ENCODE measurements at regions of chr9 and their contacts with region 1.

Region 1: DNA sequence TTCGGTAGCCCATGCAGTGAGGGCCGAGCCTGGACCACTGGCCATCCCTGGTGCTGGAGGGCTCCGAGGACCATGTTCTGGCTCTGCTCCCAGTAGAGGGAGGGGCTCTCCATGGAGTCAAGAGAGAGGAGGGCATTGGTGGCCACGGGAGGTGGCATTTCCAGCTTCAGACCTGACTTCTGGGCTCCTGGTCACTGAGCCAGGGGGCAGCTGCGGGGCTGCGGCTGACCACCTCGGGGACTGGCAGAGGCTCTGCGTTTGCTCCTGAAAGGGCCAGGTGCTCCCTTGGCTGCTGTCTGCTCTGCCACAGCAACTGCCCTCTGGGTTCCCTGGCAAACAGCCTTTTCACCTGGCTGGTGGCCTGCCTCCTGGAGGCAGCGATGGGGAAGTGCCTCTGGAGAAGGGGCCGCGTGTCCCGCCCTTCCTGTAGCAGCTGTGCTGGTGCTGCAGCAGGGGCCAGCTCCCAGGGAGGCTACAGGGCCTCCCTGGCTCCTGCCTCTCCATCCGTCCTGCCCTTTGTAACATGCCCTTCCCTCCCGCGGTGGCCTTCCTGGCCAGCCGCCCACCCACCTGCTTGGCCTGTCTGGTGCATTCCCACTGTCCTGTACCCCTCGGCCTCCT is 144.6 kb downstream of the CACNA1B start:
- DNase-seq: peak in 2 of 5 donors; percentile 5 to 10
- H3K4me3 ChIP-seq: no peak overlapping the region
- H3K4me3 Mint-ChIP-seq: peak overlapping the region in 3 of 8 donors; percentile 39 to 54 (median 49)
- H3K27ac ChIP-seq: no peak overlapping the region
- H3K27ac Mint-ChIP-seq: no peak overlapping the region
- H3K4me1 ChIP-seq: peaks cover 4% of the 10 kb centered on the region
- H3K4me1 Mint-ChIP-seq: peaks cover 0 to 11% (median 2%) of the 10 kb centered on the region in 4 donors
- H3K27me3 ChIP-seq: no peaks in the 10 kb centered on the region
- H3K27me3 Mint-ChIP-seq: peaks cover 16 to 22% of the 10 kb centered on the region in 2 donors

Region 2: GRCh38 chr9:137470785-137471184 is 551.4 kb before region 1 on chr9:
- CTCF ChIA-PET with region 1: no interaction called
- POLR2A ChIA-PET with region 1: no interaction called
- intact Hi-C with region 1: no loop called
- DNase-seq: no peak
- H3K4me3 ChIP-seq: no peak overlapping the region
- H3K4me3 Mint-ChIP-seq: no peak overlapping the region
- H3K27ac ChIP-seq: no peak overlapping the region
- H3K27ac Mint-ChIP-seq: no peak overlapping the region
- H3K4me1 ChIP-seq: no peaks in the 10 kb centered on the region
- H3K4me1 Mint-ChIP-seq: peaks cover 2 to 6% (median 4%) of the 10 kb centered on the region in 4 donors
- H3K27me3 ChIP-seq: no peaks in the 10 kb centered on the region
- H3K27me3 Mint-ChIP-seq: no peaks in the 10 kb centered on the region

Region 3: GRCh38 chr9:137672907-137673791 is 349.1 kb before region 1 on chr9:
- CTCF ChIA-PET with region 1: no interaction called
- POLR2A ChIA-PET with region 1: no interaction called
- intact Hi-C with region 1: loop called (anchors 10 kb)
- DNase-seq: peak; percentile 48 to 63 (median 60)
- H3K4me3 ChIP-seq: no peak overlapping the region
- H3K4me3 Mint-ChIP-seq: no peak overlapping the region
- H3K27ac ChIP-seq: no peak overlapping the region
- H3K27ac Mint-ChIP-seq: peak overlapping the region in 5 of 7 donors; percentile 33 to 78 (median 43)
- H3K4me1 ChIP-seq: peaks cover 17% of the 10 kb centered on the region
- H3K4me1 Mint-ChIP-seq: peaks cover 24 to 62% (median 51%) of the 10 kb centered on the region in 4 donors
- H3K27me3 ChIP-seq: no peaks in the 10 kb centered on the region
- H3K27me3 Mint-ChIP-seq: no peaks in the 10 kb centered on the region

Region 4: DNA sequence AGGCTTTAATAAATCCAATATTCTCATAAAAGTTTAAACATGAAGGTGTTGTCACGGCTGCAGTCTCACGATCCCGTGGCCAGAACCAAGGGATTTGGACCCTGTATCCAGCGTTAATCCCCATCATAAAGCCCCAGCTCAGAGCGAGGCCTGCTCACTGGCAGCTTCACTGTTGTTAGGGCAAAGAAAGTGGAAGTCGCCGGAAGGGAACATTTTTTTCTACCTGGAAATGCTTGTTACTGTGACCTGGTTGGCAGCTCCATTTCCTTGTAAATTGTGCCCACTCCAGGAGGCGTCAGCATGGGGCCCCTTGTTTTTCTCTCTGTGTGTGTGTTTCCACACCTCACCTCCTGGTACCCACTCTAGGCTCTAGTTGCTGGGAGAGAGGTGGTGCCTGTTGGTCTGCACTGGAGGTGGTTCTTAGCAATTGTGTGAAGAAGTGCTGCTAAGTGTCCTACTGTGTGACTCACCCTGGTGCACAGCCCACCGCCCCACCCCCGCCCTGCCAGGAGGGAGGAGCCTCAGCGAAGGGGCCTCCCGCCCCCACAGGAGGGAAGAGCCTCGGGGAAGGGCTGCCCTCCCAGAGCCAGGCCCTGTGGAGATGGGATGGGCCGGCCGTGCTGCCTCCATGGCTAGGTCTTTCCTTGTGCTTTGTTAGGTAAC is 298.3 kb before region 1 on chr9:
- CTCF ChIA-PET with region 1: no interaction called
- POLR2A ChIA-PET with region 1: no interaction called
- intact Hi-C with region 1: loop called (anchors 5 kb)
- DNase-seq: peak in 1 of 5 donors; percentile 27
- H3K4me3 ChIP-seq: no peak overlapping the region
- H3K4me3 Mint-ChIP-seq: peak overlapping the region in 7 of 8 donors; percentile 21 to 77 (median 69)
- H3K27ac ChIP-seq: peak overlapping the region; percentile 22
- H3K27ac Mint-ChIP-seq: peak overlapping the region; percentile 90 to 96 (median 91)
- H3K4me1 ChIP-seq: peaks cover 45% of the 10 kb centered on the region
- H3K4me1 Mint-ChIP-seq: peaks cover 49 to 74% (median 60%) of the 10 kb centered on the region in 4 donors
- H3K27me3 ChIP-seq: no peaks in the 10 kb centered on the region
- H3K27me3 Mint-ChIP-seq: no peaks in the 10 kb centered on the region

Region 5: GRCh38 chr9:138007911-138008841 is 14.1 kb before region 1 on chr9:
- CTCF ChIA-PET with region 1: no interaction called
- POLR2A ChIA-PET with region 1: no interaction called
- intact Hi-C with region 1: no loop called
- DNase-seq: no peak
- H3K4me3 ChIP-seq: no peak overlapping the region
- H3K4me3 Mint-ChIP-seq: no peak overlapping the region
- H3K27ac ChIP-seq: no peak overlapping the region
- H3K27ac Mint-ChIP-seq: peak overlapping the region in 2 of 7 donors; percentile 52 to 72
- H3K4me1 ChIP-seq: no peaks in the 10 kb centered on the region
- H3K4me1 Mint-ChIP-seq: no peaks in the 10 kb centered on the region
- H3K27me3 ChIP-seq: no peaks in the 10 kb centered on the region
- H3K27me3 Mint-ChIP-seq: peaks cover 3 to 9% of the 10 kb centered on the region in 2 donors

Region 6: GRCh38 chr9:138066049-138066448 is 43.8 kb after region 1 on chr9:
- CTCF ChIA-PET with region 1: no interaction called
- POLR2A ChIA-PET with region 1: no interaction called
- intact Hi-C with region 1: no loop called
- DNase-seq: no peak
- H3K4me3 ChIP-seq: no peak overlapping the region
- H3K4me3 Mint-ChIP-seq: no peak overlapping the region
- H3K27ac ChIP-seq: no peak overlapping the region
- H3K27ac Mint-ChIP-seq: no peak overlapping the region
- H3K4me1 ChIP-seq: no peaks in the 10 kb centered on the region
- H3K4me1 Mint-ChIP-seq: no peaks in the 10 kb centered on the region
- H3K27me3 ChIP-seq: no peaks in the 10 kb centered on the region
- H3K27me3 Mint-ChIP-seq: peaks cover 6 to 10% of the 10 kb centered on the region in 2 donors

Measured in CD4-positive, alpha-beta memory T cell (primary cell).